ENCODE measurements at regions of chr19 and their contacts with region 1.

Region 1: DNA sequence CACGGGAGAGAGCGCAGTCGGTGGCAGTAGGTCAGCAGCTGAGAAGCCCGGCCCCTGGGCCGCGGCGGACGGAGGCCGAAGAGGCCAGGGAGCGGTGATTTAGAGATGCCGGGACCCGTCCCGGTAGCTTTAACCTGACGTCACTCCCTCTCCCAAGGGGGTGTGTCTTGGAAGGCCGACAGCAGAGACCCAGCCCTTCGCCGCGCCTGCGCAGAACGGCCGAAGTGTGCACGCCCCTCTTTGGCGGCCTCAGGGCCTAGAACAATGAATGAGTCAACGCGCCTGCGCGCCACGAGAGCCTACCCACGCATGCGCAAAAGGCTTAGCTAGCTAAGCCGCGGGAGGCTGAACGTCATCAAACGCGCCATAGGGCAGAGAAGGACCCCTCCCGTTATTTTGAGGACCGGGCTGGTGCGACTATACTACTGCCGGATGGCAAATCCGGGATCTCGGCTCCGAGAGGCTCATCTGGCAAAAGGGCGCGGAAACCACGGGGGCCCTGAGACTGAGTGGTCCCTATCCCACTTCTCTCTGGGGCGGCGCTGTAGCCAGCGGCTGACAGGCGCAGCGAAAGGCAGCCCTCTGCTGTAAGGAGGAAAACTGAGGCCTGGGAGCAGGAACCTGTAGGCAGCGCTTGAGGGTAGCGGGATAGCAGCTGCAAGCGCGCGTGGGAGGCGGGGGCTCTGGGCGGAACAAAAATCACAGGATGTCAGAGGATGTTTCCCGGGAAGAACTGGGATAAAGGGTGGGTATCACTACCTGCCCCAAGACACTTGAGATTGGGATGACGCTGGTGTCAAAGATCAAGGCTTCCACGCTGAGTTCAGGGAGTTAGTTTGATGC is at the starts of genes IRGQ and ZNF576:
- DNase-seq: peak; percentile 100
- H3K4me3 Mint-ChIP-seq: peak within 1 kb of the TSS; percentile 94
- H3K27ac Mint-ChIP-seq: peak within 1 kb of the TSS; percentile 98
- H3K4me1 Mint-ChIP-seq: peaks cover 30% of the 10 kb centered on the region
- H3K27me3 Mint-ChIP-seq: no peaks in the 10 kb centered on the region
- total RNA-seq, gene IRGQ: 18.3 to 19.9 TPM
- total RNA-seq, gene ZNF576: 12.6 to 14.1 TPM

Region 2: DNA sequence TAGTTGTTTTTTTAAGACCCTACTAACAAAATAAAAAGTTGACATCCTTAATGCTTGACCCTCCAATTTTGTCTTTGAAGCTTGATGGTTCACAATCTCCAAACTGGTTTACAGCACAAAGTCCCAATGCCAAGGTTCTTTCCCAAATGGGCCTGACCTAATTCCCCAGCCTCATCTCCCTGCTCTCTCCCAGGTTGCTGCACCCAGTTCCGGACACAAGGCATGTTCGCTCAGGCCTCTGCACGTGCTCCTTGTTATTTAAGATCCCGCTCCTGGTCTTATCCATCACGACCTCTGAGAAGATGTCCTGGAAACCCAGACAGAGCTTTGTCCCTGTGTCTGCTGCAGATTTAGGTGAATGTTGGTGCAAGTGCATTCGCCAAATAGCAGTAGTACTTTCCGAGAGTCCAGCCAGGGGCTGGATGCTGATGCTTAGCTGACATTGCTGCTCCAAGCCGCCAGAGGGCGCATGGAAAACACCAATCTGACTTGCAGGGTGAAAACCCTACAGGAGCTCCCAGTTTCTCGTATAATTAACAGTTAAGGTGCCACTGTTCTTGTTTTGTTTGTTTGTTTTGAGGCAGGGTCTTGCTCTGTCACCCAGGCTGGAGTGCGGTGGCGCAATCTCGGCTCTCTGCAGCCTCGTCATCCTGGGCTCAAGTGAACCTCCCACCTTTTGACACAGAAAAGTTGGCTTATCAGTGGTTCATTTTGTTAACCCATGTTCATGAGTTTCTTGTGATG is 149.3 kb before region 1 on chr19:
- CTCF ChIA-PET with region 1: interaction called, 50 read pairs
- POLR2A ChIA-PET with region 1: no interaction called
- intact Hi-C with region 1: loop called (anchors 1 kb)
- DNase-seq: peak; percentile 87
- H3K4me3 Mint-ChIP-seq: no peak overlapping the region
- H3K27ac Mint-ChIP-seq: no peak overlapping the region
- H3K4me1 Mint-ChIP-seq: peaks cover 16% of the 10 kb centered on the region
- H3K27me3 Mint-ChIP-seq: no peaks in the 10 kb centered on the region

Region 3: DNA sequence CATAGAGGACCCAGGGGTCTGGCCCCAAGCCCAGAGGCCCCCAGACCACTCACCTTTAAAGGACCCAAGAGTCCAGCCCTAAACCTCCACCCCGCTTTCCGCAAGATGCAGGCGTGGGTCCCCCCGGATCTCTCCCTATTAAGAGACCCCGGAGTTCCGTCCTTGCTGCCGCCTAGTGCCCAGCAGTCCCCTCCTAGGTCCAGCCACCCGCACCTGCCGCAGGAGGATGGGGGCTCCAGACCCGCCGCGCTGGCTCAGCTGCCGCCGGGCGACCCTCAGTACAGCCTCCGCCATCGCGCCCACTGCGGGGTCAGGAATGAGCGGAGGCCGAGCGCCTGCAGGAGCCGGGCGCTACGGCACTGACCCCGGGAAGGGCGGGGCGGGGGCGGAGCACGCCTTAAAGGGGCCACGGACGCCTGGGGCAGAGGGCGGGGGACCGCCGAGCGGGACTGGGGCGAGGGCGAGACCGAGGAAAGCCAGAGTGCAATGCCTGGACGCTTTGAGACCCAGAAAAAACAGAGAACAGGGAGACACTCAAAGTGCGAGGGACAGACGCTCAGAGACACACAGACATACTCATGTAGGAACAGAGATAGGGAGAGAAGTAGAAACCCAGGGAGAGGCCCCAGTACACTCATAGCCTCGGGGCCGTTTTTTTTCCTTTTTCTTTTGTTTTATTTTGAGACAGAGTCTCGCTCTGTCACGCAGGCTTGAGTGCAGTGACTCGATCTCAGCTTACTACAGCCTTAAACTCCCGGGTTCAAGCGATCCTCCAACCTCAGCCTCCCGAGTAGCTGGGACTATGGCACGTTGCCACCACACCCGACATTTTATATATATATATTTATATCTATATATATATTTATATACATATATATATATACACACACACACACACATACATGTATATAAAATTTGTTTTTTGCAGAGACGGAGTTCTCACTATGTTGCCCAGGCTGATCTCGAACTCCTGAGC is 69.0 kb before region 1 on chr19 and contains the start of gene ETHE1:
- CTCF ChIA-PET with region 1: interaction called, 24 read pairs
- POLR2A ChIA-PET with region 1: interaction called, 14 read pairs
- intact Hi-C with region 1: loop called (anchors 2 kb)
- DNase-seq: peak; percentile 85
- H3K4me3 Mint-ChIP-seq: peak within 1 kb of the TSS; percentile 92
- H3K27ac Mint-ChIP-seq: peak within 1 kb of the TSS; percentile 98
- H3K4me1 Mint-ChIP-seq: peaks cover 24% of the 10 kb centered on the region
- H3K27me3 Mint-ChIP-seq: no peaks in the 10 kb centered on the region
- total RNA-seq, gene ETHE1: 104 to 112 TPM

Region 4: DNA sequence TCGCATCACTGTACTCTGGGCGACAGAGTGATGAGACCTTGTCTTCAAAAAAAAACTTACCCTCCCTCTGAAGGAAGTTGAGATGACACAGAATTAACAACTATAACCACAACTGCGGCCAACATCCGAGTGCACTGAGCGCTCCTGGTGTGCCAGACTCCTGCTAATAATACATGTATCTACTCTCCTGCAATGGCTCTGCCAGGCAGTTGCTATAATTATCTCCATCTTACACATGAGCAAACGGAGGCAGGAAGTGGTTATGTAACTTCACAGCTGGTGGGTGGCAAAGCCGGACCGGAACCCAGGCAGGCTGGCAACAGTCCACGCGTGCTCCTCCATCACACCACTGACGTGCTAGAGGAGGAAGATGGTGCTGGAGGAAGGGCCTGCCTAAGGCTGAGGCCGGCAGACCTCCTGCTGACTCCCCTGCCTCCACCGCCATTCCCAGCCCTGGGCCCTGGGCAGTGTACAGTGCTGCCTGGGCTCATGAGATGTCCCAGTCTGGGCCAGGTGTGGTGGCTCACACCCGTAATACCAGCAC is 33.5 kb before region 1 on chr19:
- CTCF ChIA-PET with region 1: interaction called, 145 read pairs
- POLR2A ChIA-PET with region 1: interaction called, 7 read pairs
- intact Hi-C with region 1: loop called (anchors 1 kb)
- DNase-seq: peak; percentile 86
- H3K4me3 Mint-ChIP-seq: peak overlapping the region; percentile 40
- H3K27ac Mint-ChIP-seq: peak overlapping the region; percentile 95
- H3K4me1 Mint-ChIP-seq: peaks cover 38% of the 10 kb centered on the region
- H3K27me3 Mint-ChIP-seq: no peaks in the 10 kb centered on the region

Region 5: DNA sequence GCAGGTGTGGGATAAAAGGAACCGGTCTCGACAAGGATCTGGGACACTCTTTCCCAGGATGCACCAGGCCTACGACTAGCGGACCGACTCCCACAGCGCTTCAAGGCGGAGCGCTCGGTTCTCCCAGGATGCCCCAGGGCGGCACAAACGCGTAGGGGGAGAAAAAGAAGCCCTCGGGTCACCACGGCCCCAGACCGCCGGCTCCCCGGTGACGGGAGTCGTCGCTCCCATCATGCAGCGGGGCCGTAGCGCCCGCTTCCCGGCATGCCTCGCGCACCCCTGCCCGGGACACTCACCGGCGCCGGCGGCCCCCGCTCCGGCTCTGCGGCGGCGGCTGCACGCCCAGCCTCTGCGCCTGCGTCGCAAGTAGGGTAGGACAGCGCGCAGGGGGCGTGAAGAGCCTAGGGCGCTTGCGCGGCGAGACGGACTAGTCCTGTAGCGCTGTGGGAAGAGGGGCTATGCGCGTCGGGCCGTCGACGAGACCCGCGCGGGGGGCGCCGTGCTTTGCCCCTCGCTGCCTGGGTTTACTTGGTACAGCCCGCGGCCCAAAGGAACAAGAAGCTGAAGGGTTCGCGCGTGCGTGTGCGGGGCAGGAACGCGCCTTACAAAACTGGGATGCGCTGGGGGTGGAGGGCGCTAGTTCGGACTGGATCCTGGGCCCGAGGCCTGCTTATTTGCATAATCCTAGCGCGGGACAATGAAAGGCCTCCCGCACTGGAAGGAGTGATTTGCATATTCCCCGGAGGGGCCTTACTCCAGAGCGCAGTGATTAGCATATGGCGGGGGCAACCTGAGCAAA is 23.2 kb after region 1 on chr19 and contains the start of gene ZNF428:
- CTCF ChIA-PET with region 1: interaction called, 3 read pairs
- POLR2A ChIA-PET with region 1: no interaction called
- intact Hi-C with region 1: loop called (anchors 1 kb)
- DNase-seq: peak; percentile 92
- H3K4me3 Mint-ChIP-seq: peak within 1 kb of the TSS; percentile 97
- H3K27ac Mint-ChIP-seq: peak within 1 kb of the TSS; percentile 98
- H3K4me1 Mint-ChIP-seq: peaks cover 14% of the 10 kb centered on the region
- H3K27me3 Mint-ChIP-seq: no peaks in the 10 kb centered on the region
- total RNA-seq, gene ZNF428: 11.7 to 12.5 TPM

Region 6: GRCh38 chr19:43738780-43739211 is 142.6 kb after region 1 on chr19:
- CTCF ChIA-PET with region 1: no interaction called
- POLR2A ChIA-PET with region 1: no interaction called
- intact Hi-C with region 1: no loop called
- DNase-seq: no peak
- H3K4me3 Mint-ChIP-seq: no peak overlapping the region
- H3K27ac Mint-ChIP-seq: peak overlapping the region; percentile 6
- H3K4me1 Mint-ChIP-seq: no peaks in the 10 kb centered on the region
- H3K27me3 Mint-ChIP-seq: no peaks in the 10 kb centered on the region